Common myeloid progenitor, CD34-positive (primary cell): ENCODE measurements at regions of chr20 and their contacts with region 1.

Region 1: DNA sequence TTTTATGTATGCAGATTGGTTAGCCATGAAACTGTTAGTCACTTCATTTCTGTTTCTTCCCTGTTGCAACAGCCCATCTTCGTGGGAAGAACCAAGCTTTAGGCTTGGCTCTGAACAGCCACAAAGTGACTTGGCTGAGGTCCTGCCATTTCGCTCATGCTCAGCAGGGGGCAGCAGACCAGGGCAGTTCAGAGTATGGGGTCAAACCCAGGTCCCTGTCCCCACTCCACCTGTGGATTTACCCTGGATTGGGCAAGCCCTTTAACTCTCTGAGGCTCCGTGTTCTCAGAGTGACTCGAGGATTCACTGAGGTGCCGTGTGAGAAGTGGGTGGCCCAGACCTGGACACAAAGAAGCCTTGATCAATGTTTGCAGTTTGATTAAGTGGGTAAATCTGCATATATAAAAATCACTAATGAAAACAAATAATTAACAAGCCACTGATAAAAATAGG is 19.8 kb upstream of the MAP1LC3A start:
- DNase-seq: peak in 2 of 3 donors; percentile 53 to 64
- H3K4me3 ChIP-seq: no peak overlapping the region
- H3K27ac ChIP-seq: no peak overlapping the region
- H3K4me1 ChIP-seq: no peaks in the 10 kb centered on the region
- H3K27me3 ChIP-seq: no peaks in the 10 kb centered on the region

Region 2: DNA sequence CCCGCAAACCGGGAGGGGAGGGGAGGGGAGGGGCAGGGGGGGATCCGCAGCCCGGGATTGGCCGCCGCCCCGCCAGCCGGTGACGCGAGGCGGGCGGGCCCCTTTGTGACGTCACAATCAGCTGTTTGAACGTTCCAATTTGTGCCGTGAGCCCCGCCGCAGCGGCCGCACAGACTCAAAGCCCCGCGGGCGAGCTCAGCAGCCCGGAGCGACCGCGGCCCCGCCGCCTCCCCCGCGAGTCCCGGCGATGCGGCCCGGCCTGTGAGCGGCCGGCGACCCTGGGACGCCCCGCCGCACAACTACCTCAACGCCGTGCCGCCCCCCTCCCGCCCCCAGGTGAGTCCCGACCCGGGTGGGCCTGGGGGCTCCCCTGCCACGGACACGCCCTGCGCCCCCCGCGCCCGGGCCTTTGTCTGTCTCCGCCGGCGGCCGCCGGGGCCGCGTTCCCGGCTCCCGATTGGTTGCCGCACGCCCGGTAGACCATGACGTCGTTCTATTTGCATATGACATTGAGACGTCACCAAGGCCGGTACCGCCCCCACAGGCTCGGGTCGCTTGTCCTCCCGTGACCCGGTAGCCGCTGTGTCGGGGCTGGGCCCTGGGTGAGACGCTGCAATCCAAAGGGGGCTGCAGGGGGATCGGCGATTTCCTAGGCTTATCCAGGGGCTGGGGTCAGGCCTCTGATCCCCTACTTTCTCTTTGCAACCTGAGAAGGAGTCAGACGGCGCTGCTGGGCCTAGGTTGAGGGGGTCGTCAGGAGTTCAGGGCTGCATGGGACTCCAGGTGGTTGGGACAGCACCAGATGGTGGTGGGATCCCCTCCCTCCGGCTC is 165.7 kb after region 1 on chr20 and contains the start of gene TP53INP2:
- CTCF ChIA-PET with region 1: interaction called, 27 read pairs
- POLR2A ChIA-PET with region 1: interaction called, 3 read pairs
- DNase-seq: peak; percentile 94
- H3K4me3 ChIP-seq: peak within 1 kb of the TSS; percentile 54 to 95 (median 78)
- H3K27ac ChIP-seq: peak within 1 kb of the TSS; percentile 54 to 86
- H3K4me1 ChIP-seq: peaks cover 0 to 23% (median 18%) of the 10 kb centered on the region in 4 experiments
- H3K27me3 ChIP-seq: peaks cover 0 to 12% (median 11%) of the 10 kb centered on the region in 5 experiments

Region 3: GRCh38 chr20:34713194-34713943 is 174.7 kb after region 1 on chr20:
- CTCF ChIA-PET with region 1: interaction called, 27 read pairs
- POLR2A ChIA-PET with region 1: no interaction called
- DNase-seq: peak; percentile 84 to 92 (median 90)
- H3K4me3 ChIP-seq: no peak overlapping the region
- H3K27ac ChIP-seq: no peak overlapping the region
- H3K4me1 ChIP-seq: peaks cover 0 to 23% (median 17%) of the 10 kb centered on the region in 4 experiments
- H3K27me3 ChIP-seq: peaks cover 0 to 5% (median 0%) of the 10 kb centered on the region in 5 experiments

Region 4: GRCh38 chr20:34768096-34768495 is 229.4 kb after region 1 on chr20:
- CTCF ChIA-PET with region 1: interaction called, 30 read pairs
- POLR2A ChIA-PET with region 1: no interaction called
- DNase-seq: no peak
- H3K4me3 ChIP-seq: no peak overlapping the region
- H3K27ac ChIP-seq: no peak overlapping the region
- H3K4me1 ChIP-seq: no peaks in the 10 kb centered on the region
- H3K27me3 ChIP-seq: no peaks in the 10 kb centered on the region